ENCODE measurements at regions of chr3 and their contacts with region 1.

Region 1: GRCh38 chr3:115169808-115170207 is 22.7 kb upstream of the ZBTB20 start:
- DNase-seq: no peak
- H3K4me3 ChIP-seq: no peak overlapping the region
- H3K27ac ChIP-seq: no peak overlapping the region
- H3K4me1 ChIP-seq: no peaks in the 10 kb centered on the region
- H3K27me3 ChIP-seq: no peaks in the 10 kb centered on the region
- CTCF ChIP-seq: peak in 5 of 6 experiments; percentile 17 to 69 (median 36)
- POLR2A ChIP-seq: no peak

Region 2: GRCh38 chr3:114152519-114153151 is 1017.2 kb before region 1 on chr3:
- intact Hi-C with region 1: loop called (anchors 10 kb)
- DNase-seq: peak; percentile 84 to 85
- H3K4me3 ChIP-seq: peak overlapping the region in 1 of 3 donors; percentile 26
- H3K27ac ChIP-seq: peak overlapping the region in 1 of 3 donors; percentile 36
- H3K4me1 ChIP-seq: no peaks in the 10 kb centered on the region
- H3K27me3 ChIP-seq: no peaks in the 10 kb centered on the region
- CTCF ChIP-seq: peak; percentile 85 to 97 (median 89)
- POLR2A ChIP-seq: no peak

Region 3: GRCh38 chr3:114370537-114371174 is 799.2 kb before region 1 on chr3:
- intact Hi-C with region 1: loop called (anchors 10 kb)
- DNase-seq: no peak
- H3K4me3 ChIP-seq: no peak overlapping the region
- H3K27ac ChIP-seq: no peak overlapping the region
- H3K4me1 ChIP-seq: peaks cover 5 to 14% of the 10 kb centered on the region in 2 donors
- H3K27me3 ChIP-seq: no peaks in the 10 kb centered on the region
- CTCF ChIP-seq: no peak
- POLR2A ChIP-seq: no peak